GM10248 (cell line): ENCODE measurements at regions of chr12 and their contacts with region 1.

Region 1: GRCh38 chr12:53746592-53747092 is 5.1 kb downstream of the CISTR start:
- DNase-seq: peak; percentile 86
- CTCF ChIP-seq: peak; percentile 100

Region 2: DNA sequence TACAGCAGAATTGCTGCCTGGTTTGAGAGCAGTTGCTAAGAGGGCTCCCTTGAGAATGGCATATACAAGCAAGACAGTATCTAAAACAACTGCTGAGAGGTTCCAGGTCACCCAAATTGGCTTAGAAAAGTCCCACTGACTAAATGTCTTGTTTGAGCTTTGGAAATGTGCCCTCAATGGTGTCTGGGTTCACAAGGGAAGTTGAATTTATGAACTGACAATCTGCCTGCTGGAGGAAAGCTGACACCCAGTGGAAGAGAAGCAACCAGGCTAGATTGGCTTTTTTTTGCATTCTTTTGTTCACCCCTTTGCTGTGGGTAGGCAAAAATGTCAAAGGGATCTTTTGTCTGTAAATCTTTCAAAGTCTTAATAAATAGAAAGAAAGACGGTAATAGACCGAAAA is 194.8 kb before region 1 on chr12:
- CTCF ChIA-PET with region 1: interaction called, 10 read pairs
- POLR2A ChIA-PET with region 1: no interaction called
- DNase-seq: peak; percentile 30
- CTCF ChIP-seq: peak; percentile 2

Region 3: GRCh38 chr12:53696285-53696654 is 50.4 kb before region 1 on chr12:
- CTCF ChIA-PET with region 1: interaction called, 434 read pairs
- POLR2A ChIA-PET with region 1: no interaction called
- DNase-seq: peak; percentile 77
- CTCF ChIP-seq: no peak

Region 4: GRCh38 chr12:53719649-53720048 is 27.0 kb before region 1 on chr12:
- CTCF ChIA-PET with region 1: interaction called, 460 read pairs
- POLR2A ChIA-PET with region 1: no interaction called
- DNase-seq: no peak
- CTCF ChIP-seq: no peak

Region 5: DNA sequence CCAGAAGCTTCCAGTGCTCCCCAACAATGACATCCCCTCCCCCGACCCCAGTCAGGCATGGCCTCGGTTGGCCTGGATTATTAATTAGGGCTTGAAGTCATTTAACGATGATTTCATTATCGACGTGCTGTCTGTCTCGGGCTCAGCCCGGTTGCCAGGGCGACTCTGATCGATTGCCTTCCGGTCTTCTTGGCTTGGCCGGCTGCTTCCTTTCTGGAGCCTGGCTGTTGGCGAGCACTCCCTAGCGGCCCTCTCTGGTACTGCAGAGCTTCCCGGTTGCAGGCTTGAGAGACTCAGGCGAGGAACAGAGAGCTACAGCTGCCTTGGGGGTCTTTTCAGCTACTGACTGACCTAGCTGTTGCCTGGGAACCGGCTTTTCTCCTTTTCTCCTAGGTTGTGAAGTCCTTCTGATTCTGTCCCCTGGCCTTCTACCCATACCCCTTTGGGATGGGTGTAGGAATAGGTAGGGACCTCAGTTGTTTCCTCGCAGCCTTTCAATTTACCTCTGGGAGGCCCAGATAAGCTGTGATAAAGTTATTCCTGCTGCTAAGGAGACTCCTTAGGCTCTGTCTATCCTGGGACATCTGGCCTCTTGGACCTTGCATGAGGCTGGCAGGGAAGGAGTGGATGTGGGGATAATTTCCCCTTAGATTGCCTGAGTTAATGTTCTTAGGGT is 10.6 kb after region 1 on chr12:
- CTCF ChIA-PET with region 1: interaction called, 222 read pairs
- POLR2A ChIA-PET with region 1: no interaction called
- DNase-seq: peak; percentile 89
- CTCF ChIP-seq: peak; percentile 96

Region 6: DNA sequence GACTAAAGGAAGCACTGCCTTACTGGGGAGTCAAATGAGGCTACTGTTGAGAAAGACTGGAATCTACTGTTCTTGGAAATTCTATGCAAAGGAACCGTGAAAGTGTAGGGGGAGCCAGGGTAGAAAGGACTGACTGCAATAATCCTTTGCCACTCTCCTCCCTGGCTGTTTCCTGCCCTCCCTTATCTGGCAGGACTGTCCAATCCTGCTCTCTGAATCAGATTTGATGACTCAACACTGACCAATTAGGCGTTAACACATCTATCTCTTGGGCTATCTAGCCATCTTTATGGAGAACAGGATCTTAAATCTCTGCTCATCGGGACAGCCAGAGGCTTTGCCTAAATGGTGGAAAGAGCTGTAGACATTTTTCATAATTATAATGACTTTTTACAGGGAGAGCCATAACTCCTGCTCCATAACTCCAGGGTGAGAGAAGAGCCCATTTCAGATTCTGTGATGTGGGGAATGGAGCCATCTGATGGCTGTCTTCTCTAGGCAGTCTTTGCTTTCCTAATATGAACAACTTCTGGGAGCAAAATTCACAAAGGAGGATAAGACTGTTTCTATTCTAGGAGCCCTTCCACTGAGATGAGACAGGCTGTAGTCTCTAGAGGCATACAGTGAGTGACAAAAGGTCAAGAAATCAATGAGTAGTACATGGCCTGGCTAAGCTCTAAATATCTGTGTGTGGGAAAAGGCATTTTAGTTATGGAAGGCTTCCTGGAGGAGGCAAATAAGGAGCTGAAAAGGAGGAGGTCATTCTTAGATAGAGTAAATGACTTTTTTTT is 74.1 kb after region 1 on chr12:
- CTCF ChIA-PET with region 1: no interaction called
- POLR2A ChIA-PET with region 1: no interaction called
- DNase-seq: no peak
- CTCF ChIP-seq: no peak